ENCODE measurements at regions of chr1 and their contacts with region 1.

Region 1: GRCh38 chr1:154936555-154937084 is at the start of gene PMVK:
- DNase-seq: peak; percentile 84 to 99 (median 97)
- ATAC-seq: peak; percentile 92
- H3K4me3 ChIP-seq: peak within 1 kb of the TSS; percentile 68
- H3K4me3 Mint-ChIP-seq: peak within 1 kb of the TSS; percentile 86 to 99 (median 95)
- H3K27ac ChIP-seq: peak within 1 kb of the TSS; percentile 97
- H3K27ac Mint-ChIP-seq: peak within 1 kb of the TSS; percentile 96 to 100 (median 99)
- H3K4me1 ChIP-seq: peaks cover 25 to 38% of the 10 kb centered on the region in 2 donors
- H3K4me1 Mint-ChIP-seq: peaks cover 41 to 68% (median 50%) of the 10 kb centered on the region in 7 donors
- H3K27me3 ChIP-seq: no peaks in the 10 kb centered on the region
- H3K27me3 Mint-ChIP-seq: no peaks in the 10 kb centered on the region
- total RNA-seq, gene PMVK: 11.3 to 35.1 (median 12.6) TPM

Region 2: DNA sequence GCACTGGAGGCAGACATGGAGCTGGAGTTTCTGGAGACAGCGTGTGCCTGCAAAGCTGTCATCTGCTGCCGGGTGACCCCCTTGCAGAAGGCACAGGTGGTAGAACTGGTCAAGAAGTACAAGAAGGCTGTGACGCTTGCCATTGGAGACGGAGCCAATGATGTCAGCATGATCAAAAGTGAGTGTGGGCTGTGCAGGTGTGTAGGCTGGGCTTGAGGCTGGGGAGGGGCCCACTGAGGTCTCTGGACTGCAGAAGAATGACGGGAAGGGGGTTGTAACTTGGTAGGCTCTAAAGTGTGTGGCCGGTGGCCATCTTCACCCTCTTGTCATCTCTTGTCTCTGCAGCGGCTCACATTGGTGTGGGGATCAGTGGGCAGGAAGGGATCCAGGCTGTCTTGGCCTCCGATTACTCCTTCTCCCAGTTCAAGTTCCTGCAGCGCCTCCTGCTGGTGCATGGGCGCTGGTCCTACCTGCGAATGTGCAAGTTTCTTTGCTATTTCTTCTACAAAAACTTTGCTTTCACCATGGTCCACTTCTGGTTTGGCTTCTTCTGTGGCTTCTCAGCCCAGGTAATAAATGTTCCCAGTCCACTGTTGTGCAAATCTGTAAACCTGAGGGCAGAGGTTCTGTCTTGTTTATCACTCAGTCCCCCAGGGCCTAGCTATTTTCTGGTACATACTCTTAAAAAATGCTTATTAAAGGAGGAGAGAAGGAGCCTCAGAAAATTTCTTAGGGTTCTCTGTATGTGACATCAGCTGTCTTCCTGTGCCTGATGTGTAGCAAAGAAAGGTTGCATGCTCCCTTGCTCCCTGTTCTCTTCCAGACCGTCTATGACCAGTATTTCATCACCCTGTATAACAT is 591.4 kb before region 1 on chr1:
- CTCF ChIA-PET with region 1: no interaction called
- POLR2A ChIA-PET with region 1: no interaction called
- intact Hi-C with region 1: loop called in 1 of 2 experiments (anchors 2 kb)
- DNase-seq: peak; percentile 56 to 79 (median 71)
- ATAC-seq: peak; percentile 55
- H3K4me3 ChIP-seq: peak overlapping the region; percentile 83
- H3K4me3 Mint-ChIP-seq: peak overlapping the region; percentile 79 to 98 (median 92)
- H3K27ac ChIP-seq: peak overlapping the region; percentile 61
- H3K27ac Mint-ChIP-seq: peak overlapping the region; percentile 31 to 100 (median 96)
- H3K4me1 ChIP-seq: peaks cover 60 to 71% of the 10 kb centered on the region in 2 donors
- H3K4me1 Mint-ChIP-seq: peaks cover 64 to 96% (median 73%) of the 10 kb centered on the region in 7 donors
- H3K27me3 ChIP-seq: no peaks in the 10 kb centered on the region
- H3K27me3 Mint-ChIP-seq: no peaks in the 10 kb centered on the region

Region 3: GRCh38 chr1:154567386-154568156 is 369.0 kb before region 1 on chr1 and contains the start of gene CHRNB2:
- CTCF ChIA-PET with region 1: no interaction called
- POLR2A ChIA-PET with region 1: no interaction called
- intact Hi-C with region 1: no loop called
- DNase-seq: peak; percentile 55 to 92 (median 71)
- ATAC-seq: peak; percentile 97
- H3K4me3 ChIP-seq: no peak within 1 kb of the TSS
- H3K4me3 Mint-ChIP-seq: peak within 1 kb of the TSS in 7 of 10 donors; percentile 9 to 68 (median 43)
- H3K27ac ChIP-seq: no peak within 1 kb of the TSS
- H3K27ac Mint-ChIP-seq: peak within 1 kb of the TSS in 2 of 9 donors; percentile 27 to 65
- H3K4me1 ChIP-seq: peaks cover 3 to 9% of the 10 kb centered on the region in 2 donors
- H3K4me1 Mint-ChIP-seq: peaks cover 0 to 9% (median 5%) of the 10 kb centered on the region in 7 donors
- H3K27me3 ChIP-seq: peaks cover 0 to 14% of the 10 kb centered on the region in 2 donors
- H3K27me3 Mint-ChIP-seq: peaks cover 15 to 48% (median 24%) of the 10 kb centered on the region in 5 donors
- total RNA-seq, gene CHRNB2: not detected

Region 4: GRCh38 chr1:154669464-154670282 is 266.9 kb before region 1 on chr1:
- CTCF ChIA-PET with region 1: no interaction called
- POLR2A ChIA-PET with region 1: no interaction called
- intact Hi-C with region 1: loop called in 1 of 2 experiments (anchors 1 kb)
- DNase-seq: peak; percentile 40 to 81 (median 73)
- ATAC-seq: peak; percentile 100
- H3K4me3 ChIP-seq: no peak overlapping the region
- H3K4me3 Mint-ChIP-seq: no peak overlapping the region
- H3K27ac ChIP-seq: no peak overlapping the region
- H3K27ac Mint-ChIP-seq: peak overlapping the region in 1 of 9 donors; percentile 30
- H3K4me1 ChIP-seq: no peaks in the 10 kb centered on the region
- H3K4me1 Mint-ChIP-seq: peaks cover 0 to 13% (median 5%) of the 10 kb centered on the region in 7 donors
- H3K27me3 ChIP-seq: no peaks in the 10 kb centered on the region
- H3K27me3 Mint-ChIP-seq: peaks cover 0 to 4% (median 0%) of the 10 kb centered on the region in 5 donors

Region 5: GRCh38 chr1:154870115-154870571 is 66.5 kb before region 1 on chr1 and contains the start of gene KCNN3:
- CTCF ChIA-PET with region 1: no interaction called
- POLR2A ChIA-PET with region 1: no interaction called
- intact Hi-C with region 1: no loop called
- DNase-seq: peak; percentile 44 to 77 (median 66)
- ATAC-seq: peak; percentile 99
- H3K4me3 ChIP-seq: no peak within 1 kb of the TSS
- H3K4me3 Mint-ChIP-seq: peak within 1 kb of the TSS in 8 of 10 donors; percentile 8 to 67 (median 34)
- H3K27ac ChIP-seq: no peak within 1 kb of the TSS
- H3K27ac Mint-ChIP-seq: peak within 1 kb of the TSS in 1 of 9 donors; percentile 28
- H3K4me1 ChIP-seq: no peaks in the 10 kb centered on the region
- H3K4me1 Mint-ChIP-seq: peaks cover 12 to 35% (median 30%) of the 10 kb centered on the region in 7 donors
- H3K27me3 ChIP-seq: peaks cover 0 to 3% of the 10 kb centered on the region in 2 donors
- H3K27me3 Mint-ChIP-seq: peaks cover 31 to 56% (median 42%) of the 10 kb centered on the region in 5 donors
- total RNA-seq, gene KCNN3: 0.05 to 0.29 (median 0.15) TPM in 4 of 5 experiments, not detected in the other

Region 6: GRCh38 chr1:154961497-154962262 is 25.1 kb after region 1 on chr1 and contains the start of gene PYGO2:
- CTCF ChIA-PET with region 1: interaction called, 5 read pairs
- POLR2A ChIA-PET with region 1: interaction called, 93 read pairs
- intact Hi-C with region 1: loop called in 1 of 2 experiments (anchors 1 kb)
- DNase-seq: peak; percentile 72 to 88 (median 78)
- ATAC-seq: peak; percentile 86
- H3K4me3 ChIP-seq: peak within 1 kb of the TSS; percentile 54
- H3K4me3 Mint-ChIP-seq: peak within 1 kb of the TSS; percentile 91 to 98 (median 94)
- H3K27ac ChIP-seq: peak within 1 kb of the TSS; percentile 96
- H3K27ac Mint-ChIP-seq: peak within 1 kb of the TSS; percentile 83 to 100 (median 95)
- H3K4me1 ChIP-seq: peaks cover 18 to 26% of the 10 kb centered on the region in 2 donors
- H3K4me1 Mint-ChIP-seq: peaks cover 16 to 58% (median 46%) of the 10 kb centered on the region in 7 donors
- H3K27me3 ChIP-seq: no peaks in the 10 kb centered on the region
- H3K27me3 Mint-ChIP-seq: no peaks in the 10 kb centered on the region
- total RNA-seq, gene PYGO2: 33.0 to 69.5 (median 46.2) TPM

Region 7: GRCh38 chr1:155063550-155064110 is 127.0 kb after region 1 on chr1 and contains the start of gene EFNA4:
- CTCF ChIA-PET with region 1: interaction called, 3 read pairs
- POLR2A ChIA-PET with region 1: interaction called, 3 read pairs
- intact Hi-C with region 1: loop called (anchors 1 to 2 kb)
- DNase-seq: peak; percentile 62 to 87 (median 86)
- ATAC-seq: peak; percentile 93
- H3K4me3 ChIP-seq: peak within 1 kb of the TSS; percentile 76
- H3K4me3 Mint-ChIP-seq: peak within 1 kb of the TSS; percentile 85 to 99 (median 95)
- H3K27ac ChIP-seq: peak within 1 kb of the TSS; percentile 69
- H3K27ac Mint-ChIP-seq: peak within 1 kb of the TSS; percentile 17 to 96 (median 83)
- H3K4me1 ChIP-seq: peaks cover 20 to 21% of the 10 kb centered on the region in 2 donors
- H3K4me1 Mint-ChIP-seq: peaks cover 21 to 42% (median 39%) of the 10 kb centered on the region in 7 donors
- H3K27me3 ChIP-seq: no peaks in the 10 kb centered on the region
- H3K27me3 Mint-ChIP-seq: no peaks in the 10 kb centered on the region
- total RNA-seq, gene EFNA4: 3.9 to 9.4 (median 7.7) TPM

Region 8: DNA sequence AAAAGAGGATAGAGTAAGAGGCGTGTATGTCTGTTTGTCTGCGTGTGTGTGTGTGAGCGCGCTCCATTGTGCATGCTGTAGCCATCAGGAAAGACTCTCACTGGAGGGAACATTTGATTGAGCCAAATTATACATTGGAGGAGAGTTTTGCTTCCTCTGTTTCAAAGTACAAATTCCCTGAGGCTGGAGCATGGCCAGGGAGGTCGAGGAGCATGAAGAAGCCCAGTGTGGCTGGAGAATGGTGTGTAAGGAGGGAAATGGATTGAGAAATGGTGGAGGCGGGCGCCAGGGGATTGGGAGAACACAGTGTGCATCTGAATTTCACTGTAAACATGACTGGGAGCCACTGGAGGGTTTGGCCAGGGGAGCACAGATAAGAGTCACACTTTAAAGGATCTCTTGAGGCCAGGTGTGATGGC is 169.0 kb after region 1 on chr1:
- CTCF ChIA-PET with region 1: no interaction called
- POLR2A ChIA-PET with region 1: no interaction called
- intact Hi-C with region 1: no loop called
- DNase-seq: no peak
- ATAC-seq: no peak
- H3K4me3 ChIP-seq: no peak overlapping the region
- H3K4me3 Mint-ChIP-seq: no peak overlapping the region
- H3K27ac ChIP-seq: no peak overlapping the region
- H3K27ac Mint-ChIP-seq: no peak overlapping the region
- H3K4me1 ChIP-seq: no peaks in the 10 kb centered on the region
- H3K4me1 Mint-ChIP-seq: peaks cover 0 to 7% (median 0%) of the 10 kb centered on the region in 7 donors
- H3K27me3 ChIP-seq: no peaks in the 10 kb centered on the region
- H3K27me3 Mint-ChIP-seq: peaks cover 0 to 39% (median 0%) of the 10 kb centered on the region in 5 donors

Region 9: DNA sequence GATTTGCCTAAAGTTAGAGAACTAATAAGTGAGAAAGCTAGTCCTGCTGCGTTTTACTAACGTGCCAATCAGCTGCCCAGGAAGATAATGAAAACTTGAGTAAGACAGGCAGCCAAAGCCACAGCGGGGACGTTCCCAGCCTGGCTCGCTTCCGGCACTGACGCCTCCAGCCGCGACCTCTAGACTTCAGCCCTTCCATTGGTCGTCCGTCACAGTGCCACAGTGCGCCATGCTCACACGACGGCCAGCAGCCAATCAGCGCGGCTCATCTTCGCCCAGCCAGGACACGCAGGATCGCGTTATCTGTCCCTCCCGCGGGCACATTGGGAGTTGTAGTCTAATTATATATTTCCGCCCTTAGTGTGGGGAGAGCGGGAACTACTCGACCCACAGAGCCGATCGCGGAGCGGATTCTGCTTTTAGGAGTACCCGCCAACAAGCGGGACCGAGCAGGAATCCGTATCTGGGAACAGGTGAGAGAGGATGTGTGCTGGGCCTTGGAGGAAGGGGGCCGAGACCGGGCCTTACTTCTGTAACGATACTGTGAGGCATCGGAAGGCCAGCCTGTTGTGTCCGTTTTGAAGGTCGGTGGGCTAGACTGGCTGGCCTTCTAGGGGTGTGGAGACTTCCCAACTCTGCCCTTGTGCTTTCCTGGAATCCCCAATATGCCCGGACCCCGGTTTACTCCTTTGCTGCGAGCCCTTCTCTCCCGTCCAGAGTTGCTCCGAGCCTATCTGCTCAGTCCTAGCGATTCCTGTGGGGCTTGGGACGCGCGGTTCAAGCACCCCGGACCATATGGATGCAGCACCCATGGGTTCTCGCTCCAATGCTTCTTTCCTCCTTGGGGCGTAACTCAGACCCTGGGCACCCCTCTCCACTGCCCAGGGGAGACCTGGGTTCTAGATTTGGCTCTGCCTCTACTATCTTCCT is 372.1 kb after region 1 on chr1 and contains the start of gene FDPS:
- CTCF ChIA-PET with region 1: no interaction called
- POLR2A ChIA-PET with region 1: no interaction called
- intact Hi-C with region 1: loop called in 1 of 2 experiments (anchors 1 kb)
- DNase-seq: peak; percentile 83 to 98 (median 95)
- ATAC-seq: peak; percentile 98
- H3K4me3 ChIP-seq: peak within 1 kb of the TSS; percentile 90
- H3K4me3 Mint-ChIP-seq: peak within 1 kb of the TSS; percentile 88 to 99 (median 97)
- H3K27ac ChIP-seq: peak within 1 kb of the TSS; percentile 87
- H3K27ac Mint-ChIP-seq: peak within 1 kb of the TSS; percentile 89 to 98 (median 96)
- H3K4me1 ChIP-seq: peaks cover 11 to 20% of the 10 kb centered on the region in 2 donors
- H3K4me1 Mint-ChIP-seq: peaks cover 12 to 43% (median 27%) of the 10 kb centered on the region in 7 donors
- H3K27me3 ChIP-seq: no peaks in the 10 kb centered on the region
- H3K27me3 Mint-ChIP-seq: no peaks in the 10 kb centered on the region
- total RNA-seq, gene FDPS: 58.5 to 193 (median 79.0) TPM

Region 10: GRCh38 chr1:156489166-156489934 is 1552.7 kb after region 1 on chr1:
- CTCF ChIA-PET with region 1: no interaction called
- POLR2A ChIA-PET with region 1: no interaction called
- intact Hi-C with region 1: no loop called
- DNase-seq: peak in 6 of 9 donors; percentile 23 to 53 (median 36)
- ATAC-seq: peak; percentile 53
- H3K4me3 ChIP-seq: peak overlapping the region; percentile 26
- H3K4me3 Mint-ChIP-seq: peak overlapping the region; percentile 74 to 88 (median 80)
- H3K27ac ChIP-seq: peak overlapping the region; percentile 59
- H3K27ac Mint-ChIP-seq: peak overlapping the region; percentile 65 to 99 (median 94)
- H3K4me1 ChIP-seq: peaks cover 75 to 92% of the 10 kb centered on the region in 2 donors
- H3K4me1 Mint-ChIP-seq: peaks cover 78 to 97% (median 90%) of the 10 kb centered on the region in 7 donors
- H3K27me3 ChIP-seq: no peaks in the 10 kb centered on the region
- H3K27me3 Mint-ChIP-seq: no peaks in the 10 kb centered on the region